Activated CD4-positive, alpha-beta memory T cell treated with anti-CD3 and anti-CD28 coated beads for 36 hours (primary cell): ENCODE measurements at regions of chr1 and their contacts with region 1.

Region 1: GRCh38 chr1:111227851-111228747 is 586 bp downstream of the CHI3L2 start:
- DNase-seq: no peak
- H3K4me3 Mint-ChIP-seq: no peak overlapping the region
- H3K27ac Mint-ChIP-seq: peak overlapping the region; percentile 42
- H3K4me1 Mint-ChIP-seq: peaks cover 63% of the 10 kb centered on the region
- H3K27me3 Mint-ChIP-seq: no peaks in the 10 kb centered on the region

Region 2: DNA sequence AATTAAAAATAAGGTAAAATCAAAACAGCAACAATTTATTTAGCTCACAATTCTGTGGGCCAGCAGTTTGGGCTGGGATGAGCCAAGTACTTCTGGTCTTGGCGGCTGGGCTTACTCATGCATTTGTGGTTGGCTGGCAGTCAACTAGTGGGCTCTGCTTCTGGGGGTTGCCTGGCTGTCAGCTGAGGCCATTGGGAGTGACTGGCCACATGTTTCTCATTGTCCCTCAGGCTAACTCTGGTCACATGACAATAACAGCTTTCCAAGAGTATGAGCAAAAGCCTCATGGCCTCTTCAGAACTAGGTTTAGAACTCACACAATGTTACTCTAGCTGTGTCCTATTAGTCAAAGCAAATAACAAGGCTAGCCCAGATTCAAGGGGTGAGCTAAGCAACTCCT is 47.0 kb after region 1 on chr1:
- CTCF ChIA-PET with region 1: interaction called, 11 read pairs
- POLR2A ChIA-PET with region 1: no interaction called
- intact Hi-C with region 1: loop called (anchors 2 kb)
- DNase-seq: peak; percentile 69
- H3K4me3 Mint-ChIP-seq: no peak overlapping the region
- H3K27ac Mint-ChIP-seq: peak overlapping the region; percentile 79
- H3K4me1 Mint-ChIP-seq: peaks cover 36% of the 10 kb centered on the region
- H3K27me3 Mint-ChIP-seq: peaks cover 21% of the 10 kb centered on the region

Region 3: GRCh38 chr1:111334169-111334568 is 106.1 kb after region 1 on chr1:
- CTCF ChIA-PET with region 1: interaction called, 63 read pairs
- POLR2A ChIA-PET with region 1: no interaction called
- intact Hi-C with region 1: loop called (anchors 1 kb)
- DNase-seq: peak; percentile 62
- H3K4me3 Mint-ChIP-seq: no peak overlapping the region
- H3K27ac Mint-ChIP-seq: peak overlapping the region; percentile 54
- H3K4me1 Mint-ChIP-seq: peaks cover 2% of the 10 kb centered on the region
- H3K27me3 Mint-ChIP-seq: no peaks in the 10 kb centered on the region